PC-9 (cell line): ENCODE measurements at regions of chr1 and their contacts with region 1.

Region 1: DNA sequence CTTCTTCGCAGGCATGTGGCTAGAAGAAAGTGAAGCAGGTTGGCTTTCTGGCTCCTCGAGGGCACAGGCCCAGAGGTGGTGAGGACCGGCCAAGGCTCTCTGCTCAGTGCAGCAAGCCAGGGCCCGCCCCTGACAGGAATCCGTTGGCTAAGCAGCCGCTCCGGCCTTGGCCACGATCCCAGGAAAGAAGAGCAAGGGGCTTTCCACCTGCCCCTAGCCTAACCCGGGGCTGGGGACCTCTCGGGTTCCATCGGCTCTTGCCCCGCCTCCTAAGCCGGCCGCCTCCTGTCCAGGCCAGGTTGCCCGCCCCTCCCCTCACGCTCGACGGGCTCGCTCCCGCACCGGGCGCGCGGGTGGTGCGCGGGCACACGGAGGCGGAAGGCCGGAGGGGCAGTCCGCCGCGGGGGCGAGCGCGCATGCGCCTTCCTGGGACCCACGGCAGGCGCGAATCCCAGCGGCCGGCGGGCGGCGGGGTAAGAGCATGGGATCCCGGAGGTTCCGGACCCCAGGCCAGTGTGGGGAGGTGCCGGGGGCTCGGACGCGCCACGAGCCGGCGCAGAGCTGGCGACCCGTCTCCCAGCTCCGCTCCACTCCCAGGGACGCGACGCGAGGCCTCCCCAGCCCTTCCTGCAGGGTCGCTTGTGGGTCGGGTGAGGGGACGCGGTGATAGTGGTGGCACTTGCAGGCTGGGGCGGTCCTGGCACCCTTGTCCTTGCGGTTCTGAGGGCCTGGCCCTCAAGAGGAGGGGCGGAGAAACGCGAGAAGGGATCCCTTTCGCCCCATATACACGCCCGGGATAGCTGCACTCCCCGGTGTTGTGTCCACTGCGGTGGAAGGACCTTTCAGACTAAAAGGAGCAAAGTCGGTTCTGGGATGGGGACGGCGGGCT is at the start of gene ALG6:
- DNase-seq: peak; percentile 87 to 99
- H3K4me3 ChIP-seq: peak within 1 kb of the TSS; percentile 91
- H3K27ac ChIP-seq: peak within 1 kb of the TSS; percentile 34
- H3K4me1 ChIP-seq: peaks cover 18% of the 10 kb centered on the region
- H3K27me3 ChIP-seq: no peaks in the 10 kb centered on the region
- CTCF ChIP-seq: no peak
- total RNA-seq, gene ALG6: 11.2 and 14.7 TPM in 2 replicates

Region 2: GRCh38 chr1:62436466-62437256 is 930.8 kb before region 1 on chr1 and contains the start of gene USP1:
- CTCF ChIA-PET with region 1: no interaction called
- POLR2A ChIA-PET with region 1: no interaction called
- intact Hi-C with region 1: loop called (anchors 5 kb)
- DNase-seq: peak; percentile 99
- H3K4me3 ChIP-seq: peak within 1 kb of the TSS; percentile 100
- H3K27ac ChIP-seq: peak within 1 kb of the TSS; percentile 95
- H3K4me1 ChIP-seq: peaks cover 23% of the 10 kb centered on the region
- H3K27me3 ChIP-seq: no peaks in the 10 kb centered on the region
- CTCF ChIP-seq: no peak
- total RNA-seq, gene USP1: 42.1 and 50.3 TPM in 2 replicates

Region 3: DNA sequence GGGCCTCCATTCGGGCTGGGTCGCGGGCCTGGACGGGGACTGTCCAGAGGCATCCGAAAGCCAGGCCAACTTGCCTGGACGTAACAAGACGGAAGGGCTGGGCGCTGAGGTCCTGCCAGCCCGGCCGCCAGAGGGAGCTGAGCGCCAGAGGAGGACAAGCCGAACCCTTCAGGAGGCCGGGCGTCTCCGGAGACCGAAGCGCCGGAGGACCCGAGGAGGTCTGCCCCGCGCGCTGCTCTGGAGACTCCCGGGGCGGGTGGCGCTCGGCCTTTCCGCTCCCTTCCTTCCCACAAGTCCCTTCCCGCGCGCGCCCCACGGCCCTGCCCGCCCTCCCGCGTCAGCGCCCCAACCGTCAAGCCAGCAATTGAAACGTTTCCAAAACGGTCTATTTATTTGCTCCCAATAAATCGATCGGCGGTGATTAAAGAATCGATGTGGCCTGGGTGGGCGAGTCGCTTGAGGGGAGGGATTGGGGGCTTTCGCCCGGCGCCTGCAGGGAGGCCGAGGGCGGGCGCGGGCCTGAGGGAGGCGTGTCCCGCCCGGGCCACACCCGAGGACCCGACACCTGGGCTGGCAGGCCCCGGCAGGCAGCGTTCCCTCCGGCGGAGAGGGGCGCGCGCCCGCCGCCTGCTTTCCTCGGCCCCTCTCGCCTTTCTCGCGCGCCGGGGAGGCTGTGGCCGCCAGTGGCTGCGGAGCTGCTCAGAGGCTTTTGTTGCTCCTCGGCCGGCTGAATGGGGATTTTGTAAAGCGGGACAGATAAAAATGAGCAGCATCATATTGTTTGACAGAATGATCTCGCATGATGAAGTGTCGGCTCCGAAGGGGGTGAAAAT is 50.3 kb before region 1 on chr1:
- CTCF ChIA-PET with region 1: no interaction called
- POLR2A ChIA-PET with region 1: no interaction called
- intact Hi-C with region 1: loop called (anchors 5 kb)
- DNase-seq: peak; percentile 68 to 87
- H3K4me3 ChIP-seq: peak overlapping the region; percentile 70
- H3K27ac ChIP-seq: no peak overlapping the region
- H3K4me1 ChIP-seq: peaks cover 6% of the 10 kb centered on the region
- H3K27me3 ChIP-seq: peaks cover 21% of the 10 kb centered on the region; the same call in 1 of the 2 replicates
- CTCF ChIP-seq: peak; percentile 77

Region 4: DNA sequence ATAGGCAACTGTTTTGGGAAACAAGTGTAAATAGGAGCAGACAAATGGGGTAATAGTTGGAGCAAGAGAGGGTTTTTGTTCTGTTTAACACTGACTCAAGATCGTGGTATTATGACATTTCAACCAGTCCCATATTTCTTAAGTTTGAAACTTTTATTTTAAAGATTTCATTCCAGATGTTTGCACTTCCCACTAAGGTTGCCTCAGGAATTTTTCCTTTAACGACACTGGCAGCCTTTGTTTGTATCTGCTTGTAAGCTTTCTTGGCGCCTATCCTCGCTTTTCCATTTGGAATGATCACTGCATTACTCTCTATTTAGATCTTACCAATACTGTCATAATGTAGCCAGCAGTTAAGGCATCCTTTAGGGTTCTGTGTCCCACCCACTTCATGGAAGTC is 67.7 kb after region 1 on chr1:
- CTCF ChIA-PET with region 1: no interaction called
- POLR2A ChIA-PET with region 1: interaction called, 16 read pairs
- intact Hi-C with region 1: no loop called
- DNase-seq: no peak
- H3K4me3 ChIP-seq: no peak overlapping the region
- H3K27ac ChIP-seq: no peak overlapping the region
- H3K4me1 ChIP-seq: no peaks in the 10 kb centered on the region
- H3K27me3 ChIP-seq: no peaks in the 10 kb centered on the region
- CTCF ChIP-seq: no peak

Region 5: DNA sequence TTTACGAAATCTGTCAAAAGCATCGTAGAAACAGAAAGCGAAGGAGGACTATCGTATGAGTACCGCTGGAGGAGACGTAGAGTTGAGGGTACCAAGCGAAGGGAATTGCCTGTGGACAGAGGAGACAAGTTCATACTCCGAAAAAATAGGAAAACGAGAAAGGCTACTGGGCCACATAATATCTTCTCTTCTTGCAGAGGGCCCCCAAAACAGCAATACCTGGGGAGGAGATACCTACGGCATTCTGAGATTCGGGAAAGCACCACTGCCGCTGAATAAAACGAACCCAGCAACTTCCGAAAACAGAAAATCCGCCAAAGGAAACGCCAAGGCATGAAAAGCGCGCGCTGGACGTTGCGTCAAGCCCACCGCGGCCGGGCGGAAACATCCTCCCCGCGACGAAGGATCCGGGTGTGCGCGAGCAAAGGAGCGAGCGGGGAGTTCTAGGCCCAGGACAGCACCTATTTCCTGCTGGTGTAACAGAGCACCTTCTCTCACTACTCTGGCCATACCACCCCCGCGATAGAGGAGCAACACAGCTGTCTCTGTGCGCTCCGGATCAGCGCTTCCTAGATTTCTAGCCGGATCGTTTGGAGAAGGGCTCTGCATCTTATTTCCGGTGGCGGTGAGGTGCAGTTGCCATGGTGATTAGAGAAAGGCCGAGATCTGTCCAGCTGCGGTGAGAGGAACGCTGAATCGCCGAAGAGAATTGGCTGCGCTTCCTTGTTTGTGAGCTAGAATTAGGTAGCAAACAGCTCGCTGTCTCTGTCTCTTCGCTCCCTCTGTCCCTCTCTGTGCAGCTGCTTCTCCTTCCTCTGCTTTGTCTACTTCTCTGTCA is 155.7 kb after region 1 on chr1 and contains the starts of genes EFCAB7 and ITGB3BP:
- CTCF ChIA-PET with region 1: no interaction called
- POLR2A ChIA-PET with region 1: no interaction called
- intact Hi-C with region 1: loop called (anchors 2 kb)
- DNase-seq: peak; percentile 86 to 90
- H3K4me3 ChIP-seq: peak within 1 kb of the TSS; percentile 98
- H3K27ac ChIP-seq: peak within 1 kb of the TSS; percentile 67
- H3K4me1 ChIP-seq: peaks cover 24% of the 10 kb centered on the region
- H3K27me3 ChIP-seq: no peaks in the 10 kb centered on the region
- CTCF ChIP-seq: no peak
- total RNA-seq, gene EFCAB7: 7.7 and 11.2 TPM in 2 replicates
- total RNA-seq, gene ITGB3BP: 61.7 and 79.2 TPM in 2 replicates